AG04450 (cell line): ENCODE measurements at regions of chr3 and their contacts with region 1.

Region 1: DNA sequence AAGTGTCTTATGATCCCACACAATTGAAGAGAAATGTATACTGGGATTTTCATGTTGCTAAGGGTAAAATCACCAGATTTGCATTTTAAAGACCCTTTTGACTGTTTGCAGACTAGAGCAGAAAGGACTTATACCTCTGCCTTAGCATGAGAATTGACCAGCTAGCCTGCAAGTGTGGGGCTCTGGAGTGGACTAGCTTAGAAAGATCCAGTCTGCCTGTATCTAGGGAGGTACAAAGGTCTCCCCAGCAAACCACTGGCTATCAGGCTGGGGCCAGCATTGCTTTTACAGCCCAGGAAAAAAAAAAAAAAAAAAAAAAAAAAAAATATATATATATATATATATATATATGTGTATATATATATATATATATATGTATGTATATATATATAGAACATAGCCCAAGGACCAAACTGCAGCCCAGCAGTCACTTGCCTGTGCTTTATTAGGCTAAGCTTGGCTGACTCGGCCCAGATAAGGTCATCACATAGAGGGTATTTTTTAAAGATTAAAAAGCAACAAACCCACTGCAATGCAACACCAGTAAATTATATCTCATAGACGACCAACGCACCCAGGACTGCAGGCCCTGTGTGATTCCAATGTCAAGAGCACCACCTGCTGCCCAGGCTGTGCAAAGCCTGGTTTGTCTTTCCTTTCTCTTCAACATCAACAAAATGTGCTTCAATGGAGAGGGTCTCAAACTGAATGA is 63.7 kb downstream of the DCLK3 start:
- DNase-seq: peak; percentile 54
- H3K4me3 ChIP-seq: no peak overlapping the region
- H3K27ac ChIP-seq: no peak overlapping the region
- H3K27me3 ChIP-seq: no peaks in the 10 kb centered on the region
- CTCF ChIP-seq: peak; percentile 96

Region 2: GRCh38 chr3:35965908-35966307 is 734.8 kb before region 1 on chr3:
- CTCF ChIA-PET with region 1: interaction called, 45 read pairs
- POLR2A ChIA-PET with region 1: no interaction called
- DNase-seq: peak; percentile 1
- H3K4me3 ChIP-seq: no peak overlapping the region
- H3K27ac ChIP-seq: no peak overlapping the region
- H3K27me3 ChIP-seq: no peaks in the 10 kb centered on the region
- CTCF ChIP-seq: peak; percentile 55

Region 3: DNA sequence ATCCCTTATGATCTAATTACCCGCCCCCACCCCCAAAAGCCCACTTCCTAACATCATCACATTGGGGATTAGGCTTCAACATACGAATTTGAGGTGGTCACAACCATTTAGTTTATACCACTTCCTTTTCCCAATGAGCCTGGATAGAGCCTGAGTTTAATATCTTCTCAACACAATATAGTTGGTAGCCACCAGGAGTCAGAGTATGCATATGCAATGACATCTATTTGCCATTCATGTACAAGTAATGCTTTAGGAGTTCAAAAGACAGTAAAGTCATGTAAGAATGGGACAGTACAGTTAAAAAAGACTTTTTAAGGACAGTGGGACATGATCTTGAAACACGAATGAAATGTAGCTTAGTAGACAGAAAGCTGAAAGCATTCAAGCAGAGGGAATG is 108.7 kb before region 1 on chr3:
- CTCF ChIA-PET with region 1: interaction called, 27 read pairs
- POLR2A ChIA-PET with region 1: no interaction called
- DNase-seq: no peak
- H3K4me3 ChIP-seq: no peak overlapping the region
- H3K27ac ChIP-seq: no peak overlapping the region
- H3K27me3 ChIP-seq: no peaks in the 10 kb centered on the region
- CTCF ChIP-seq: peak; percentile 35